GM10248 (cell line): ENCODE measurements at regions of chrX and their contacts with region 1.

Region 1: GRCh38 chrX:132615391-132616131 is 126.7 kb upstream of the MBNL3 start:
- DNase-seq: no peak
- CTCF ChIP-seq: peak; percentile 34

Region 2: DNA sequence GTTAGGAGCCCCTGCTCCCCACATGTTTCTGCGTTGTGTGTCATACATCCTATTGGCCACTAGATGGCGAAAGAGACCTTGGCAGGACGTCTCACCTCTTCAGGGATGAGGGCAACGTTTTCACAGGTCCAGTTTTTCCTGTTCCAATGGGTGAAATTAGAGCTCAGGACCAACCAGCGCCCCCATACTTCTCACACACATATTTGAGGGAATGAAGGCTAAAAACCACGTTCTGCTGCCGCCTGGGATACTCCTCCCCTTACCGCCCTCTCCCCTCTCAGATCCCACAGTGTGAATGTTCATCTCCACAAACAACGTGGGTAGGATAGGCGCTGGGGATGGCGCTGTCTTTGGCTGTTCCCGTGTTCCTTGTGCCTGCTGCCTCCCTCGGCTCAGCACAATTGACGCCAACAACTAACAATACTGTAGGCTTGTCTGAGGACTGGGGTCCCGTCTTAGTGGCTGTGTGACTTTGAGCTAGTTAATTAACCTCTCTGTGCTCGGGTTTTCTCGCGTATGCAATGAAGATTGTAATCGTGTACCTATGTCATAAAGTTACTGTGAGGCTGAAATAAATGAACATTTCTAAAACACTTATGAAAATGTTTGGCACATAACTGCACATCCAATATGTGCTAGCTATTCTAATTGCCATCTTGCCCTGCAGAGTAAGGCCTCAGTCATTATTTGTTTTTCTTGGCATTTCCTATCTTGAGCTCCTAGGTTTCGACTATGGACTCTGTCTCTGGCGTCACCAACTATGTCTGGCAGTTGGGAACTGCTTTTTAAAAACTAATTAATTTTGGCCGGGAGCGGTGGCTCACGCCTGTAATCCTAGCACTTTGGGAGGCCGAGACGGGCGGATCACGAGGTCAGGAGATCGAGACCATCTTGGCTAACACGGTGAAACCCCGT is 773.8 kb before region 1 on chrX:
- CTCF ChIA-PET with region 1: interaction called, 23 read pairs
- POLR2A ChIA-PET with region 1: no interaction called
- DNase-seq: peak; percentile 69
- CTCF ChIP-seq: peak; percentile 73

Region 3: GRCh38 chrX:132226169-132226568 is 389.4 kb before region 1 on chrX:
- CTCF ChIA-PET with region 1: interaction called, 21 read pairs
- POLR2A ChIA-PET with region 1: no interaction called
- DNase-seq: no peak
- CTCF ChIP-seq: peak; percentile 36

Region 4: GRCh38 chrX:132602701-132603100 is 12.9 kb before region 1 on chrX:
- CTCF ChIA-PET with region 1: interaction called, 16 read pairs
- POLR2A ChIA-PET with region 1: no interaction called
- DNase-seq: no peak
- CTCF ChIP-seq: no peak